Activated CD4-positive, alpha-beta T cell treated with anti-CD3 and anti-CD28 coated beads, Interleukin-2, amount 10 ng/mL, durations not matched to agents 24 days and 14 days (primary cell): ENCODE measurements at regions of chr3 and their contacts with region 1.

Region 1: GRCh38 chr3:71583566-71584449 is at the start of gene FOXP1:
- DNase-seq: peak; percentile 87
- H3K4me3 Mint-ChIP-seq: peak within 1 kb of the TSS; percentile 89
- H3K27ac Mint-ChIP-seq: peak within 1 kb of the TSS; percentile 95
- H3K4me1 Mint-ChIP-seq: peaks cover 38% of the 10 kb centered on the region
- H3K27me3 Mint-ChIP-seq: peaks cover 17% of the 10 kb centered on the region
- total RNA-seq, gene FOXP1: 102 and 110 TPM in 2 replicates

Region 2: DNA sequence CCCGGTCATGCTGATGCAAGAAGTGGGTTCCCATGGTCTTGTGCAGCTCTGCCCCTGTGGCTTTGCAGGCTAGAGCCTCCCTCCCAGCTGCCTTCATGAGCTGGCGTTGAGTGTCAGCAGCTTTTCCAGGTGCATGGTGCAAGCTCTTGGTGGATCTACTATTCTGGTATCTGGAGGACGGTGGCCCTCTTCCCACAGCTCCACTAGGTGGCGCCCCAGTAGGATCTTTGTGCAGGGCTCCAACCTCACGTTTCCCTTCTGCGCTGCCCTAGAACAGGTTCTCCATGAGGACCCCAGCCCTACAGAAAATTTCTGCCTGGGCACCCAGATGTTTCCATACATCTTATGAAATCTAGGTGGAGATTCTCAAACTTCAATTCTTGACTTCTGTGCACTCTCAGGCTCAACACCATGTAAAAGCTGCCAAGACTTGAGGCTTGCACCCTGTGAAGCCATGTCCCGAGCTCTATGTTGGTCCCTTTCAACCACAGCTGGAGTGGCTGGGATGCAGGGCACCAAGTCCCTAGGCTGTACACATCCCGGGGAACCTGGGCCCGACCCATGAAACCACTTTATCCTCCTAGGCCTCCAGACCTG is 1033.0 kb before region 1 on chr3:
- intact Hi-C with region 1: loop called (anchors 1 kb)
- DNase-seq: peak; percentile 90
- H3K4me3 Mint-ChIP-seq: no peak overlapping the region
- H3K27ac Mint-ChIP-seq: no peak overlapping the region
- H3K4me1 Mint-ChIP-seq: no peaks in the 10 kb centered on the region
- H3K27me3 Mint-ChIP-seq: peaks cover 12% of the 10 kb centered on the region

Region 3: GRCh38 chr3:71006810-71007785 is 576.7 kb before region 1 on chr3:
- intact Hi-C with region 1: loop called (anchors 1 kb)
- DNase-seq: no peak
- H3K4me3 Mint-ChIP-seq: no peak overlapping the region
- H3K27ac Mint-ChIP-seq: peak overlapping the region; percentile 12
- H3K4me1 Mint-ChIP-seq: peaks cover 54% of the 10 kb centered on the region
- H3K27me3 Mint-ChIP-seq: no peaks in the 10 kb centered on the region

Region 4: DNA sequence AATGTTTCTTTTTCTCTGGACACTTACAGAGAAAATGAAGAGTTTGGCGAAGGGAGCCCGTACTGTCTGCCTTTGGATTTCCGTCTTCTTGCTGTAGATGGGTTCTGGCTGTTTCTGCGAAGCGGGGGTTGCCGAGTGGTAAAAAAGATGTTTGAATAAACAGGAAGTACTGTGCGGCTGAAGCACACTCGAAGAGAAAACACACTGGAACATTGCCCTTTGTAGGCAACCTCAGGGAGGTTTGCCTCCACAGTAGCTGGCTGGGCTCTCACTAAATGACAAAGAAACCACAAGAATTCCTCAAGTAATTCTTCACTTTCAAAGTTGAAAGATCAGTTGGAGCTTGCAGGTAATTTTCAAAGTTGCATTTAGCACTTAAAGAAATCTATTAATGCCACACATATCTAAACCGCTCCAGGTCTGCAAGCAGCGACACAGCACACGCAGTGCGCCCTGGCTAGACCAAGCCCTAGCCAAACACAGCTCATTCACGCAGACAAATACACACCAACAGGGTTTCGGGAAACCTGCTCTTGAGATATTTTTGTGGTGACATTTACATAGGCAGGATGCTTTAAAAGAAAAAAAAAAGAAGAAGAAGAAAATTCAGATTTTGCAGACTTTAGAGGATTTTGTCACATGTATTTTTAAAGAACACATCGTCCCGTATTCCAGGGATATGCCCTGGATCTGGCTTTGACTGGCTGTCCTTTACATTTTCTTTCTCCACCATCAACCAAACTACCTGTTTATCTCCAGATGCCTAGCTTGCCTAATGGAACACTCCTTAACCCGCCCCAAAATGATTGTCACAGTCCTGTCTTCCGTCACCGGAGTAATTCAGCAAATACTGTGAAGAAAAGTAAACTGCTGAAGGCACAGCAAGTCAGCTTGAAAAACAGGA is 453.1 kb before region 1 on chr3:
- intact Hi-C with region 1: loop called (anchors 1 kb)
- DNase-seq: peak; percentile 93
- H3K4me3 Mint-ChIP-seq: peak overlapping the region; percentile 96
- H3K27ac Mint-ChIP-seq: peak overlapping the region; percentile 98
- H3K4me1 Mint-ChIP-seq: peaks cover 55% of the 10 kb centered on the region
- H3K27me3 Mint-ChIP-seq: no peaks in the 10 kb centered on the region

Region 5: GRCh38 chr3:71360764-71361163 is 223.0 kb before region 1 on chr3:
- intact Hi-C with region 1: loop called (anchors 2 kb)
- DNase-seq: no peak
- H3K4me3 Mint-ChIP-seq: peak overlapping the region; percentile 23
- H3K27ac Mint-ChIP-seq: peak overlapping the region; percentile 89
- H3K4me1 Mint-ChIP-seq: peaks cover 25% of the 10 kb centered on the region
- H3K27me3 Mint-ChIP-seq: peaks cover 19% of the 10 kb centered on the region

Region 6: DNA sequence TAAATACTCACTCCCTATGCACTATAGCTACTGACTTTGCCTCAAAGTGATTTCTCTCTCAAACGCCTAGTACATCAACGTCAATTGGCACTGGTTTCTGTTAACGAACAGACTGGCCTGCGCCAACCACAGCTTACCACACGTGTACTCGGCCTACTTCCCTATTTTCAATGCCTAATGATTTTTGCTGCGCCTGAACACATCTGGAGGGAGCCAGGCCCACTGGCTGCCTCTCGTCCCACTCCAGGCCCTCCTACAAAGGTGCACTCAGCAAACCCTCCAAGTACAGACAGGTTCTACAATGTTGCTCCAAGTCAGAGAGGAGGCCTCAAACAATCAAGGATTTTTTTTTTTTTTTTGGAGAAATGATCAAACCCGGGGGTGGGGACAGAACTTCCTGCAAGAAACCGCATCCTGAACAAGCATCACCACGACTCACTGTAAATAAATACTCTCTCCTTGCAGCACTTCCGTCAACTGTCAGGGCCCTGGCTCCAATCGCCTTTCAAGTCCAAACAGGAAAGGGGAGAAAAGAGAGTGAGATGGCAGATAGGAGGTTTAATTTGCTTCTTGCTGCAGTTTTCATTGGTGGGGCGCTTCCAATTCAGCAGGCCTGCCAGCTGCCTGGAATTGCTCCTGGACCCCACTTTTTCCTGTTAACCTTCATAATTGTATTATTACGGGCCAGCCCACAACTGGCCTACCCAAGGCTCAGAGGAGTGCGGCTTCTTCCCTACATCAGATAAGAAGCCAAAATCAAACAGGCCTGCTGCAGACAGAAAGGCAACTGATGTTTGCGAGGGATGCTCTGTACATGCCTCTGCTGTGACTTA is 139.6 kb before region 1 on chr3:
- intact Hi-C with region 1: loop called (anchors 5 kb)
- DNase-seq: peak; percentile 93
- H3K4me3 Mint-ChIP-seq: peak overlapping the region; percentile 76
- H3K27ac Mint-ChIP-seq: peak overlapping the region; percentile 99
- H3K4me1 Mint-ChIP-seq: peaks cover 80% of the 10 kb centered on the region
- H3K27me3 Mint-ChIP-seq: no peaks in the 10 kb centered on the region

Region 7: GRCh38 chr3:71542521-71543370 is 41.1 kb before region 1 on chr3:
- intact Hi-C with region 1: loop called (anchors 2 kb)
- DNase-seq: no peak
- H3K4me3 Mint-ChIP-seq: no peak overlapping the region
- H3K27ac Mint-ChIP-seq: no peak overlapping the region
- H3K4me1 Mint-ChIP-seq: peaks cover 2% of the 10 kb centered on the region
- H3K27me3 Mint-ChIP-seq: peaks cover 15% of the 10 kb centered on the region

Region 8: GRCh38 chr3:71641674-71642073 is 57.9 kb after region 1 on chr3:
- intact Hi-C with region 1: no loop called
- DNase-seq: no peak
- H3K4me3 Mint-ChIP-seq: no peak overlapping the region
- H3K27ac Mint-ChIP-seq: no peak overlapping the region
- H3K4me1 Mint-ChIP-seq: no peaks in the 10 kb centered on the region
- H3K27me3 Mint-ChIP-seq: no peaks in the 10 kb centered on the region